ENCODE measurements at regions of chr1 and their contacts with region 1.

Region 1: GRCh38 chr1:52683367-52683940 is 14.7 kb downstream of the COA7 start:
- DNase-seq: no peak
- CTCF ChIP-seq: no peak

Region 2: GRCh38 chr1:52413410-52413989 is 270.0 kb before region 1 on chr1:
- in situ Hi-C with region 1: loop called (anchors 10 kb)
- DNase-seq: no peak
- CTCF ChIP-seq: no peak